Naive thymus-derived CD4-positive, alpha-beta T cell (primary cell): ENCODE measurements at regions of chr2 and their contacts with region 1.

Region 1: DNA sequence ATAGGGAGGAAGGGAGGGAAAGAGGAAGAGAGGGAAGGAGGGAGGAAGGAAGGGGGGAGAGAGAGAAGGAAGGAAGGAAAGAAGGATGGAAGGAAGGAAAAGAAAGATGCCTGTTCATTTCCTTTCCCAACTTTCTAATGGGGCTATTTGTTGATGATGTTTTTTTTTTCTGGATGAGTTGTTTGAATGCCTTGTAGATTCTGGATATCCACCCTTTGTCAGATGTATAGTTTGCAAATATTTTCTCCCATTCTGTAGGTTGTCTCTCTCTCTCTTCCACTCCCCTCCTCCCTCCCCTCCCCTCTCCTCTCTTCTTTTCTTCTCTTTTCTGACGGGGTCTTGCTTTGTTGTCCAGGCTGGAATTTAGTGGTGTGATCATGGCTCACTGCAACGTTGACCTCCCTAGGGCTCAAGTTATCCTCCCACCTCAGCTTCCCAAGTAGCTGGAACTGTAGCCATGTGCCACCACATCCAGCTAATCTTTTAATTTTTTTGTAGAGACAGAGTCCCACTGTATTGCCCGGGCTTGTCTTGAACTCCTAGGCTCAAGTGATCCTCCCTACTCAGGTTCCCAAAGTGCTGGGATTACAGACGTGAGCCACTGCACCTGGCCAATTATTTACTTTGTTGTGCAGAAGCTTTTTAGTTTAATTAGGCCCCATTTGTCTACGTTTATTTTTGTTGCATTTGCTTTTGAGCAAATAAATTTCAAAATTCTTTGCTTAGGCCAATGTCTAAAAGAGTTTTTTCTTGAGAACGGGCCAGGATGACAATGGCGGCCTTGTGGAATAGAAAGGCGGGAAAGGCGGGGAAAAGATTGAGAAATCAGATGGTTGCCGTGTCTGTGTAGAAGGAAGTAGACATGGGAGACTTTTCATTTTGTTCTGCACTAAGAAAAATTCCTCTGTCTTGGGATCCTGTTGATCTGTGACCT is 57.3 kb upstream of the FAM117B start:
- DNase-seq: no peak
- ATAC-seq: no peak
- H3K4me3 ChIP-seq: no peak overlapping the region
- H3K4me3 Mint-ChIP-seq: no peak overlapping the region
- H3K27ac ChIP-seq: no peak overlapping the region
- H3K27ac Mint-ChIP-seq: peak overlapping the region in 2 of 9 donors; percentile 38 to 53
- H3K4me1 ChIP-seq: no peaks in the 10 kb centered on the region
- H3K4me1 Mint-ChIP-seq: peaks cover 0 to 2% (median 0%) of the 10 kb centered on the region in 7 donors
- H3K27me3 ChIP-seq: no peaks in the 10 kb centered on the region
- H3K27me3 Mint-ChIP-seq: no peaks in the 10 kb centered on the region

Region 2: GRCh38 chr2:202831242-202832220 is 254.0 kb after region 1 on chr2:
- CTCF ChIA-PET with region 1: no interaction called
- POLR2A ChIA-PET with region 1: no interaction called
- intact Hi-C with region 1: loop called in 1 of 2 experiments (anchors 2 kb)
- DNase-seq: peak in 8 of 9 donors; percentile 10 to 56 (median 46)
- ATAC-seq: peak; percentile 80
- H3K4me3 ChIP-seq: no peak overlapping the region
- H3K4me3 Mint-ChIP-seq: peak overlapping the region in 8 of 10 donors; percentile 11 to 71 (median 38)
- H3K27ac ChIP-seq: no peak overlapping the region
- H3K27ac Mint-ChIP-seq: peak overlapping the region in 4 of 9 donors; percentile 14 to 75 (median 63)
- H3K4me1 ChIP-seq: peaks cover 0 to 9% of the 10 kb centered on the region in 2 donors
- H3K4me1 Mint-ChIP-seq: peaks cover 6 to 17% (median 10%) of the 10 kb centered on the region in 7 donors
- H3K27me3 ChIP-seq: no peaks in the 10 kb centered on the region
- H3K27me3 Mint-ChIP-seq: no peaks in the 10 kb centered on the region

Region 3: GRCh38 chr2:202870431-202871299 is 293.1 kb after region 1 on chr2:
- CTCF ChIA-PET with region 1: interaction called, 3 read pairs
- POLR2A ChIA-PET with region 1: no interaction called
- intact Hi-C with region 1: loop called (anchors 1 kb)
- DNase-seq: peak; percentile 32 to 68 (median 57)
- ATAC-seq: peak; percentile 85
- H3K4me3 ChIP-seq: peak overlapping the region; percentile 84
- H3K4me3 Mint-ChIP-seq: peak overlapping the region; percentile 89 to 98 (median 94)
- H3K27ac ChIP-seq: peak overlapping the region; percentile 60
- H3K27ac Mint-ChIP-seq: peak overlapping the region in 7 of 9 donors; percentile 8 to 84 (median 66)
- H3K4me1 ChIP-seq: peaks cover 0 to 3% of the 10 kb centered on the region in 2 donors
- H3K4me1 Mint-ChIP-seq: peaks cover 0 to 13% (median 7%) of the 10 kb centered on the region in 7 donors
- H3K27me3 ChIP-seq: no peaks in the 10 kb centered on the region
- H3K27me3 Mint-ChIP-seq: no peaks in the 10 kb centered on the region

Region 4: DNA sequence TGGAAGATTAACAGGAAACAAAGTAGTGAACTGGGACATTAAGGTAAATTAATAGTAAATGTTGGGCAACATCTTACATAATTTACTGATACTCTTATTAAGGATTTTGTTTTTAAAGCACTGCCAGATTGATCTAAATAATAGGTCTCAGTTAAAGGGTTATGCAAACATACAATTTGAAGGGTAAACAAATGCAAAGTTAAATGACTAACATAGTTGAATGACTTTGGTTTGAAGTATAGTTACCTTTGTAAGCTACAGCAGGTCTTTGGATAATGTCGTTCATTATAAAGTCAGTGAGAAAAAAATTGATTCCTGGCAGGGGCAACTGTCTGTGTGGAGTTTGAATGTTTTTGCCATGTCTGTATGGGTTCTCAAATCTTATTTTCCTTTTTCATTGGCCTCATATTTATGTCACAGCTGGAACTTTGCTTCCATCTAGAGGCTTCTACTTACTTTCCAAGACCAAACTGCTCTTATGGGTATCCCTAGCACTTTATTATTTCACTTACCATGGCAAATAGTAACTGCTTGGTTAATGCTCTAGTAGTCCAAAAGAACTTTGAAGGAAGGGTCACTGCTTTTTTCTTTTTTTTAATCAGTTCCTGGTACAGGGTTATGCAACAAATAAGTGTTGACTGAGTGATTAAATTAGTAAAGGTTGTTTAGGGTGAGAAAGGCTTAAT is 544.9 kb after region 1 on chr2:
- CTCF ChIA-PET with region 1: no interaction called
- POLR2A ChIA-PET with region 1: no interaction called
- intact Hi-C with region 1: loop called in 1 of 2 experiments (anchors 10 kb)
- DNase-seq: peak in 1 of 9 donors; percentile 2
- ATAC-seq: no peak
- H3K4me3 ChIP-seq: no peak overlapping the region
- H3K4me3 Mint-ChIP-seq: no peak overlapping the region
- H3K27ac ChIP-seq: no peak overlapping the region
- H3K27ac Mint-ChIP-seq: no peak overlapping the region
- H3K4me1 ChIP-seq: no peaks in the 10 kb centered on the region
- H3K4me1 Mint-ChIP-seq: no peaks in the 10 kb centered on the region
- H3K27me3 ChIP-seq: no peaks in the 10 kb centered on the region
- H3K27me3 Mint-ChIP-seq: no peaks in the 10 kb centered on the region

Region 5: GRCh38 chr2:203155406-203155805 is 577.9 kb after region 1 on chr2:
- CTCF ChIA-PET with region 1: no interaction called
- POLR2A ChIA-PET with region 1: no interaction called
- intact Hi-C with region 1: loop called (anchors 1 to 10 kb)
- DNase-seq: peak in 5 of 9 donors; percentile 0 to 22 (median 9)
- ATAC-seq: peak; percentile 22
- H3K4me3 ChIP-seq: no peak overlapping the region
- H3K4me3 Mint-ChIP-seq: no peak overlapping the region
- H3K27ac ChIP-seq: no peak overlapping the region
- H3K27ac Mint-ChIP-seq: peak overlapping the region in 2 of 9 donors; percentile 13 to 25
- H3K4me1 ChIP-seq: no peaks in the 10 kb centered on the region
- H3K4me1 Mint-ChIP-seq: peaks cover 6 to 12% (median 10%) of the 10 kb centered on the region in 7 donors
- H3K27me3 ChIP-seq: no peaks in the 10 kb centered on the region
- H3K27me3 Mint-ChIP-seq: no peaks in the 10 kb centered on the region

Region 6: DNA sequence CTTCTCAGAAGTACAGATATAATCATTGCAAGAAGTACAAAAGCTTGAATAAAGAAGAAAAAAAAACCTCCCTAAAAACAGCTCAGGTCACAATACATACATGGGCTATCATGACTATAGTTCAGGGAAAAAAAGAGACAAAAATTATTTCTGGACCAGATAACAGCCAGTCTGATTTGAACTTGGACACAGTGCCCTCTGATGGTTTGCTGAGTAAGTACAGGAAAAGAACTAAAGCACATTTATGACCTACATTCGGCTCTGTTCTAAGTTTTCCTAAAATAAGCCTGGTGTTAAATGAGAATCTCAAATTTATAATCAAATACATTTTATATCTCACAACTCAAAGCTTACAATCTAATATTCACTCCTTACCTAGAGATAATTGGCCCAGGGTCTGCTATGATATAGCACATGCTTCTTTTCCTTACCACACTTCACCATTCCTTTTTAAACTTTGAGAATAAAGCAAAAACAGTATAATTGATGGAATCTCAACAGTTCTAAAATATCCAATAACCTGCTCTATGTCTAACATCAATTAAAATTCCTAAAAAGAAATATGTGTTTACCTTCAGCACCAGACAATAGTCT is 876.4 kb after region 1 on chr2:
- CTCF ChIA-PET with region 1: no interaction called
- POLR2A ChIA-PET with region 1: no interaction called
- intact Hi-C with region 1: loop called (anchors 1 kb)
- DNase-seq: peak in 7 of 9 donors; percentile 10 to 52 (median 34)
- ATAC-seq: peak; percentile 73
- H3K4me3 ChIP-seq: no peak overlapping the region
- H3K4me3 Mint-ChIP-seq: no peak overlapping the region
- H3K27ac ChIP-seq: no peak overlapping the region
- H3K27ac Mint-ChIP-seq: no peak overlapping the region
- H3K4me1 ChIP-seq: no peaks in the 10 kb centered on the region
- H3K4me1 Mint-ChIP-seq: peaks cover 0 to 1% (median 0%) of the 10 kb centered on the region in 7 donors
- H3K27me3 ChIP-seq: no peaks in the 10 kb centered on the region
- H3K27me3 Mint-ChIP-seq: no peaks in the 10 kb centered on the region